BJ (cell line): ENCODE measurements at regions of chr16 and their contacts with region 1.

Region 1: DNA sequence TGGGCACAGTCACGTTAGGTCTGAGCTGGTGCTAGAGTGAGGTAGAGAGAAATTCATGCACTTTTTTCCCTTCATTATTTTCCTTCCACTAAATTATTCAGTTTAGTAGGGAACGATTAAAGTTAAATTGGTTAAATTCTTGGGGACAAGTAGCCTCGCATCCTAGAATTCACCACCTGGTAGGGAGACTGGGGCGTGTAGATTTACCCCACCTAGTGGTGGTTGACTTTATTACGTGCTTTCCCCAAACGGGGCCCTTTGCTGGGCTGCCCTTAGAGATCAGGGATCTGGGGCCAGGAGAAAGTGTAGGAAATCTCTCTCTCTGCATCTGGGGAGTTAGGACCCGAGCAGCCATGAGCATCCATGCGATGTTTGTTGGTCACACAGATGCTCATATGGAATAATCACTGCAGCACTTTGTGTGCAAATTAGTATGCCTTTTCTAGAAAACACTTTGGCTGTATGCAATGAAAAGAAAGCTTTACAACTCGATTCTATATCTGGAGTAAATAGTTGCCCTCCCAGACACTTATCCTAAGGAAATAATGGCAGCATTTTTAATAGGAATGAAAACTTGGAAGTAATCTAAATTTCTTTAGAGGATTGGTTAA is 107.0 kb downstream of the PLCG2 start:
- DNase-seq: no peak
- H3K4me3 ChIP-seq: no peak overlapping the region
- H3K27me3 ChIP-seq: no peaks in the 10 kb centered on the region; the same call in 1 of the 2 replicates
- CTCF ChIP-seq: peak; percentile 75

Region 2: GRCh38 chr16:81901483-81901882 is 15.4 kb after region 1 on chr16:
- CTCF ChIA-PET with region 1: interaction called, 10 read pairs
- POLR2A ChIA-PET with region 1: no interaction called
- DNase-seq: no peak
- H3K4me3 ChIP-seq: no peak overlapping the region
- H3K27me3 ChIP-seq: no peaks in the 10 kb centered on the region
- CTCF ChIP-seq: no peak

Region 3: GRCh38 chr16:81921085-81921814 is 35.2 kb after region 1 on chr16:
- CTCF ChIA-PET with region 1: no interaction called
- POLR2A ChIA-PET with region 1: no interaction called
- DNase-seq: no peak
- H3K4me3 ChIP-seq: no peak overlapping the region
- H3K27me3 ChIP-seq: no peaks in the 10 kb centered on the region
- CTCF ChIP-seq: no peak